SK-N-SH (cell line): ENCODE measurements at regions of chr1 and their contacts with region 1.

Region 1: GRCh38 chr1:27603681-27604578 is at the start of gene AHDC1:
- DNase-seq: peak; percentile 95
- H3K4me3 ChIP-seq: peak within 1 kb of the TSS; percentile 92
- H3K27ac ChIP-seq: peak within 1 kb of the TSS; percentile 60 to 72; a peak in 3 of 4 replicates
- H3K4me1 ChIP-seq: peaks cover 33 to 39% of the 10 kb centered on the region in 2 experiments
- H3K27me3 ChIP-seq: no peaks in the 10 kb centered on the region
- CTCF ChIP-seq: no peak
- EP300 ChIP-seq: no peak
- RAD21 ChIP-seq: no peak; the same call in 1 of the 2 replicates
- polyA plus RNA-seq, gene AHDC1: 3.1 and 8.5 TPM in 2 replicates

Region 2: GRCh38 chr1:27365372-27366112 is 238.4 kb before region 1 on chr1:
- CTCF ChIA-PET with region 1: interaction called, 10 read pairs
- POLR2A ChIA-PET with region 1: interaction called, 3 read pairs
- DNase-seq: peak; percentile 97
- H3K4me3 ChIP-seq: peak overlapping the region; percentile 69 to 89
- H3K27ac ChIP-seq: peak overlapping the region; percentile 84 to 94
- H3K4me1 ChIP-seq: peaks cover 4 to 14% of the 10 kb centered on the region in 2 experiments; a peak in 2 of 4 replicates
- H3K27me3 ChIP-seq: no peaks in the 10 kb centered on the region
- CTCF ChIP-seq: no peak
- EP300 ChIP-seq: peak in 1 of 2 experiments; percentile 66; a peak in 3 of 4 replicates
- RAD21 ChIP-seq: no peak

Region 3: DNA sequence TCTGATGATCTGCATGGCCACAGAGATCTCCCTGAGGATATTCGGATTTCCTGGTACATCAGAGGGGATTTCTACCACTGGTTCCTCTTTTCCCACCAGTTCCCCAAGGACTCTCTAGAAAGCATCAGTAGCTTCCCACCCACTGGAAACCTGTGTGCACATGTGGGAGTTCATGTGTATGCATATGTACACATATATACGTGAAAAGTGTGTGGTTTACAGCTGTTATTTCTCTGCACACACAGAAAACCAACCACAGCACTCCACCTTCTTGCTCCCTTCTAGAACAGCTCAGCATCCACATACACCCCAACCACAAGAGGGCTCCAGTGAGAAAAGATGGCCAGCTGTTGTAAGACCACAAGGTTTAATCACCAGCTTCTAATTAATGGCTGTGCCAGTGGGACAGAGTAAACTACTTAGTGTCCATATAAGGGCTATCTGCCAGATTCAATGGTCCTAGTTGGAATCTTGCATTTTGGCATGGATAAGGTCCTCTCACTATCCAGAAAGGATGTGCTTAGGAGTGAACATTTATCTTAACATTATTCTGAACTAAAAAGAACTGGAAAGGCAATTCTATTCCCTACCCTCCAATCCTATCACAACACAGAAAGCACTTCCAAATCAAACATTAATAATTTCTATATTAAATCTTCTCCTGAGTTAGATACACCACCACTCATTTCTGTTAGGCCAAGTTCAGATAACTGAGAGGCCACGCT is 187.4 kb before region 1 on chr1:
- CTCF ChIA-PET with region 1: interaction called, 111 read pairs
- POLR2A ChIA-PET with region 1: no interaction called
- DNase-seq: peak; percentile 45
- H3K4me3 ChIP-seq: no peak overlapping the region
- H3K27ac ChIP-seq: no peak overlapping the region
- H3K4me1 ChIP-seq: peaks cover 0 to 14% of the 10 kb centered on the region in 2 experiments; a peak in 1 of 4 replicates
- H3K27me3 ChIP-seq: no peaks in the 10 kb centered on the region
- CTCF ChIP-seq: peak; percentile 58
- EP300 ChIP-seq: no peak
- RAD21 ChIP-seq: peak; percentile 56

Region 4: DNA sequence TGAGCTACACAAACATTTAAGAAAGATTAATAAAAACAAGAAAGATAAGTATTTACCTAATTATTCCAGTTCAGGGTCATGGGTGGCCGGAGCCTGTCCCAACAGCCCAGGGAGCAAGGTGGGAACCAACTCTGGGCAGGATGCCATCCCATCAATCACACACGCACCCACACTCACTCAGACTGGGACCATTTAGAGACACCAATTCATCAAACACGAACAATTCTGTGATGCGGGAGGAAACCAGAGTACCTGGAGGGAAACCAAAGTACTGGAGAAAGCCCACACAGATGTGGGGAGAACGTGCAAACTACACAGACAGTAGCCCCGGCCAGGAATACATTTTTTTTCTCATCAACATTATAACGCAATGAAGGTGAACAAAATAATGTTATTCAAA is 130.2 kb before region 1 on chr1:
- CTCF ChIA-PET with region 1: no interaction called
- POLR2A ChIA-PET with region 1: no interaction called
- DNase-seq: no peak
- H3K4me3 ChIP-seq: no peak overlapping the region
- H3K27ac ChIP-seq: no peak overlapping the region
- H3K4me1 ChIP-seq: peaks cover 0 to 2% of the 10 kb centered on the region in 2 experiments; a peak in 1 of 4 replicates
- H3K27me3 ChIP-seq: no peaks in the 10 kb centered on the region
- CTCF ChIP-seq: no peak
- EP300 ChIP-seq: no peak
- RAD21 ChIP-seq: no peak

Region 5: GRCh38 chr1:27536767-27537166 is 67.2 kb before region 1 on chr1:
- CTCF ChIA-PET with region 1: interaction called, 10 read pairs
- POLR2A ChIA-PET with region 1: interaction called, 5 read pairs
- DNase-seq: peak; percentile 93
- H3K4me3 ChIP-seq: peak overlapping the region in 1 of 2 experiments; percentile 20; a peak in 1 of 4 replicates
- H3K27ac ChIP-seq: peak overlapping the region; percentile 91 to 93
- H3K4me1 ChIP-seq: peaks cover 40 to 57% of the 10 kb centered on the region in 2 experiments
- H3K27me3 ChIP-seq: no peaks in the 10 kb centered on the region
- CTCF ChIP-seq: no peak
- EP300 ChIP-seq: 0 out of 4 replicates have a peak, but pooled peaks of 1 of the 2 experiments have one; percentile 14
- RAD21 ChIP-seq: no peak

Region 6: GRCh38 chr1:27616441-27616840 is 12.5 kb after region 1 on chr1:
- CTCF ChIA-PET with region 1: interaction called, 67 read pairs
- POLR2A ChIA-PET with region 1: no interaction called
- DNase-seq: no peak
- H3K4me3 ChIP-seq: no peak overlapping the region
- H3K27ac ChIP-seq: no peak overlapping the region
- H3K4me1 ChIP-seq: peaks cover under 1 to 7% of the 10 kb centered on the region in 2 experiments; a peak in 1 of 4 replicates
- H3K27me3 ChIP-seq: no peaks in the 10 kb centered on the region
- CTCF ChIP-seq: no peak
- EP300 ChIP-seq: no peak
- RAD21 ChIP-seq: no peak

Region 7: DNA sequence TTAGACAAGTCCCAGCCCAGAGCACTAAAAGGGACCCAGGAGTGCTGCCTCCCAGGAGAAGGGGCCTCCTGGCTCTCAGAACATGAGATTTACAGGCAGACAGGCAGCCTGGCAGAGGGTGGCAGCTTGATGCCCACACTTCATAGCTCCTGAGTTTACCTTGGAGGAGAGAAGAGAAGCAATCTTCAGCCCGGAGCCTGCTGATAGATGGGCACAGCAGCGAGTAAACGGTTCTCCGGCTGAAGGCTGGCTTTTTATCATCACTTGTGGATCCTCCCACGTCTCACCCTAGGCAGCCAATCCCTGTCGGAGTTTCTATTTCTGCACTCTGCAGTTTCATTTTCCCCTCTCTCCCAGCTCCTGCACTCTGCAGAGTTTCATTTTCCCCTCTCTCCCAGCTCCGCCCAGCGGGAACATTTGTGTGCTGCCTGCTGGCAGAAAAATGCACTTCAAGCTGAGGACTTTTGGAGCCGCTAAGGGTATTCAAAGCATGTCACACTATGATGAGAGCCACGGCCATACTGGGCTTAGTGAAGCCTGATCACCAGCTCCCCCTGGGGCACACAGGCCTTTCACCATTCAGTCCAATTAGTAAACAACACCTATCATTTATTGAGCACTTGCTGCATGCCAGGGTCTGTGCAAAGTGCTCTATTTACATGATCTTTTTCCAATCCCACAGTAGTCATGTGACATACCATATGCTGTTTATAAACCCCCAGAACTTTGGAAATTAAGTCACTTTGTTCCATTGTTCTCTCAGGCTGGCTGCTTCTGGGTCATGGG is 68.2 kb after region 1 on chr1 and contains the start of gene IFI6:
- CTCF ChIA-PET with region 1: interaction called, 526 read pairs
- POLR2A ChIA-PET with region 1: no interaction called
- DNase-seq: peak; percentile 91
- H3K4me3 ChIP-seq: peak within 1 kb of the TSS; percentile 54 to 67
- H3K27ac ChIP-seq: peak within 1 kb of the TSS; percentile 73 to 89
- H3K4me1 ChIP-seq: peaks cover 6 to 20% of the 10 kb centered on the region in 2 experiments; a peak in 3 of 4 replicates
- H3K27me3 ChIP-seq: no peaks in the 10 kb centered on the region
- CTCF ChIP-seq: peak; percentile 44
- EP300 ChIP-seq: peak in 1 of 2 experiments; percentile 35; a peak in 1 of 4 replicates
- RAD21 ChIP-seq: peak; percentile 52
- polyA plus RNA-seq, gene IFI6: 29.0 and 35.6 TPM in 2 replicates

Region 8: DNA sequence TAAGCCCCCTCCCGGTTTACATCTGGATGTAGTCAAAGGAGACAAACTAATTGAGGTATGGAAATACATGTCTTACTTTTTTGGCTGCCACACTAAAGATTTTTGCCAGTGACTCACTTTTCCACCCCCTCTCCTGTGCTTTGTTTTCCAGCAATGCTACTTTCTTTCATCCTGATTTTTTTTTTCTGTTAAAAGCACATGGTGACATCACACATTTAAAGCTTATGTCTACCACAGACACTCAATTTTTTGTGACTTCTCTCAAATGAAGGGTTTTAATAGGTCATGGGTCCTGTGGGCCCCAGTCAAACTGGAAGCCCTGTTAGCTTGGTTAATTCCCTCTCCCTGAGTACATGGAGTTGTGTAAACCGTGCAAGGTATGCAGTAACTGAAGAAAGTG is 228.8 kb after region 1 on chr1:
- CTCF ChIA-PET with region 1: no interaction called
- POLR2A ChIA-PET with region 1: no interaction called
- DNase-seq: no peak
- H3K4me3 ChIP-seq: no peak overlapping the region
- H3K27ac ChIP-seq: peak overlapping the region in 1 of 2 experiments; percentile 89; a peak in 2 of 4 replicates
- H3K4me1 ChIP-seq: peaks cover 0 to 9% of the 10 kb centered on the region in 2 experiments; a peak in 2 of 4 replicates
- H3K27me3 ChIP-seq: no peaks in the 10 kb centered on the region
- CTCF ChIP-seq: no peak
- EP300 ChIP-seq: no peak
- RAD21 ChIP-seq: no peak